MCF 10A (cell line): ENCODE measurements at regions of chr9 and their contacts with region 1.

Region 1: DNA sequence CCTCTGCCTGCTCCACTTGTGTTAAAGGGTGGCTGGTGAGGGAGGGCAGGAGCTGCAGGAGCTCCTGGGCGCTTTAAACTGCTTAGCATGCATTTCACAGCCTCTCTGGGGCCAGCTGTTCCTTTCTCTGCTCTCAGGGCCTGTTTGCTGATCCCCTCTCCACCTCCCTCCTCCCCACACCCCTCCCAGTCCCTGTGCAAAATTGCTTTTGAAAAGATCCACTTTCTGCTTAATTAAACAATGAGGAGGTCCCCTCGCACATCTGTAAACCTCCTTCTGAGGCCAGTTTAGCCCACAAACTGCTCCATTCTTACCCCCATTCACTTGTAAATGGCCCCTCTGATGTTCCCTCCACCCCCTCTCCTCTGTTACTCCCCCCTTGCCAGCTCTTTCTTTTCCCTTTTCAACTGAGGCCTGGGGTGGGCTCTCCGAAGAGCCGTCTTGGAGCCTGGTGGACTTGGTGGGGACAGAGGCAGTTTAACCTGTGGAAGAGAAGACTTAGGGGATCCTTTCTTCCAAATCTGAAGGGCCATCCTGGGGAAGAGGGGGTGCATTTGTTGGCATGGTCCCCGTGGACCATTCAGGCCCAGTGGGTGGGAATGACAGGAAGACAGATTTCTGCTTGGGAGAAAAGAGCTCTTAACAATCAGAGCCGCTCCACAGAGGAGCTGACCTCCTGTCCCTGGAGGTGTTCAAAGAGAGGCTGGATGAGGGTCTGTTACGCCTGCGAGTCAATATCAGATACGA is 12.0 kb downstream of the URM1 start:
- DNase-seq: no peak
- H3K4me3 Mint-ChIP-seq: no peak overlapping the region
- H3K27ac Mint-ChIP-seq: no peak overlapping the region
- H3K4me1 Mint-ChIP-seq: no peaks in the 10 kb centered on the region
- H3K27me3 Mint-ChIP-seq: no peaks in the 10 kb centered on the region
- CTCF ChIP-seq: no peak

Region 2: DNA sequence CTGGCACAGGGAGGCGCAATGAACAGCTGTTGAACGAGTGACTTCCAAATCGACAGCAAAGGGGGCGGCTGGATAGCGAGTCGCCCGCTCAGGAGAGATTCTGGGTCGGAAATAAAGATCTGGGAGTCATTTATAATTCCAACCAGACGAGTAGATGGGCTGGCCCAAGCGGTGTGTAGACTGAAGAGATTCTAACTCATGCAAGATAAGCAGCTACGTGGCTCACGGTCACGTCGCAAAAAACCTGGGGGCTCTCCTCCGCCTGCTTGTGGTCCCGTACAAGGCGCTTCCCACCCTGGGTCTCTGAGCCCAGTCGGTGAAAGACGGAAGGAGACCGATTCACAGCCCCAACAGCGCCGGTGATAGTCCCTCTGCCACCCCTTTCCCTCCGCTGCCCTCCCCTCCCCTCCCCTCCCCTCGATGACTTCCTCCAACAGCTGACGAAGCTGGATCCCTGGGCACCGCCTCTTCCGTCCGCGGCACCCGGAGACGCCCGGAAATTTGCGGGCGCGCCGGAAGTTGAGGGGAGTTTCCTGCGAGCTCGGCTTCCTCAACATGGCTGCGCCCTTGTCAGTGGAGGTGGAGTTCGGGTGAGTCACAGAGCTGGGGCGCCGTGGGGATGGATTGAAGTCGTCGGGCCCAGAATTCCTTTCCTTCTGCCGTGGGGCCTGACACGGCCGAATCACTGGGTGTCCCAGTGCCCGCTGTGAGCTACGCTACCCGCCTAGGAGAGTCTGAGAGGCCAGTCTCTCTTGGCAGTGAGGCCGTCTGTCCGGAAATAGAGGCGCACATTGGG is 12.2 kb before region 1 on chr9 and contains the start of gene URM1:
- CTCF ChIA-PET with region 1: interaction called, 3 read pairs
- POLR2A ChIA-PET with region 1: interaction called, 23 read pairs
- intact Hi-C with region 1: no loop called
- DNase-seq: peak; percentile 96
- H3K4me3 Mint-ChIP-seq: peak within 1 kb of the TSS; percentile 84
- H3K27ac Mint-ChIP-seq: peak within 1 kb of the TSS; percentile 84
- H3K4me1 Mint-ChIP-seq: peaks cover 34% of the 10 kb centered on the region
- H3K27me3 Mint-ChIP-seq: no peaks in the 10 kb centered on the region
- CTCF ChIP-seq: no peak
- total RNA-seq, gene URM1: 56.8 and 57.7 TPM in 2 replicates

Region 3: GRCh38 chr9:128455849-128456612 is 72.9 kb after region 1 on chr9 and contains the start of gene ODF2:
- CTCF ChIA-PET with region 1: no interaction called
- POLR2A ChIA-PET with region 1: no interaction called
- intact Hi-C with region 1: no loop called
- DNase-seq: peak; percentile 95
- H3K4me3 Mint-ChIP-seq: peak within 1 kb of the TSS; percentile 98
- H3K27ac Mint-ChIP-seq: peak within 1 kb of the TSS; percentile 96
- H3K4me1 Mint-ChIP-seq: no peaks in the 10 kb centered on the region
- H3K27me3 Mint-ChIP-seq: no peaks in the 10 kb centered on the region
- CTCF ChIP-seq: no peak
- total RNA-seq, gene ODF2: 34.4 and 37.3 TPM in 2 replicates